ENCODE measurements at regions of chr5 and their contacts with region 1.

Region 1: GRCh38 chr5:147382776-147383175 is 127.1 kb downstream of the DPYSL3 start:
- DNase-seq: no peak
- ATAC-seq: peak; percentile 63
- H3K4me3 Mint-ChIP-seq: no peak overlapping the region
- H3K27ac Mint-ChIP-seq: no peak overlapping the region
- H3K4me1 Mint-ChIP-seq: peaks cover 20% of the 10 kb centered on the region
- H3K27me3 Mint-ChIP-seq: no peaks in the 10 kb centered on the region; the same call in none of the 2 replicates
- CTCF ChIP-seq: no peak

Region 2: GRCh38 chr5:146940295-146940694 is 442.5 kb before region 1 on chr5:
- CTCF ChIA-PET with region 1: no interaction called
- POLR2A ChIA-PET with region 1: no interaction called
- DNase-seq: no peak
- ATAC-seq: no peak
- H3K4me3 Mint-ChIP-seq: no peak overlapping the region
- H3K27ac Mint-ChIP-seq: no peak overlapping the region
- H3K4me1 Mint-ChIP-seq: peaks cover 10% of the 10 kb centered on the region
- H3K27me3 Mint-ChIP-seq: no peaks in the 10 kb centered on the region
- CTCF ChIP-seq: no peak

Region 3: DNA sequence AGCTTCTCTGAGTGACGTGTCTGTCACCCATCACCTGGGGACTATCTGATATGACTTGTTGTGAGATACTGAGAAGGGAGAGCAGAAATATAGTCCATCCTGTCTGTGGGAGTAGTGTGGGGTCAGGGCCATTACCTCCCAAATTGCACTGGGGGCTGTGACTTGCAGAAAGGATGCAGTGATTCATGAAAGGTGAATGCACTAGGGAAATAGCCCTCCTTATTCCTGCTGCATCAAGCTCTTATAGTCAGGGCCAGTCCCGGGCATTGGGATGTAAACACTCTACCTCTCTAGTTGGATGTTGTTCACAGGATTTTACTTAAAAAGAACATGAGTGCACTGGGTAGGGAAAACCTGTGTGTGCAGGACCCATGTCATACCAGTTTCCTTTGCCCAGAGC is 23.2 kb before region 1 on chr5:
- CTCF ChIA-PET with region 1: no interaction called
- POLR2A ChIA-PET with region 1: no interaction called
- DNase-seq: no peak
- ATAC-seq: no peak
- H3K4me3 Mint-ChIP-seq: no peak overlapping the region
- H3K27ac Mint-ChIP-seq: no peak overlapping the region
- H3K4me1 Mint-ChIP-seq: peaks cover 2% of the 10 kb centered on the region; the same call in 1 of the 2 replicates
- H3K27me3 Mint-ChIP-seq: no peaks in the 10 kb centered on the region
- CTCF ChIP-seq: no peak

Region 4: GRCh38 chr5:147397616-147398015 is 14.8 kb after region 1 on chr5:
- CTCF ChIA-PET with region 1: interaction called, 10 read pairs
- POLR2A ChIA-PET with region 1: no interaction called
- DNase-seq: peak; percentile 45
- ATAC-seq: peak; percentile 81
- H3K4me3 Mint-ChIP-seq: no peak overlapping the region
- H3K27ac Mint-ChIP-seq: peak overlapping the region; percentile 44; the same call in 1 of the 2 replicates
- H3K4me1 Mint-ChIP-seq: peaks cover 10% of the 10 kb centered on the region
- H3K27me3 Mint-ChIP-seq: no peaks in the 10 kb centered on the region
- CTCF ChIP-seq: no peak

Measured in WTC11 (cell line).